H1 (cell line): ENCODE measurements at regions of chr3 and their contacts with region 1.

Region 1: GRCh38 chr3:48429317-48429959 is 448 bp downstream of the PLXNB1 start:
- DNase-seq: peak in 1 of 2 experiments; percentile 90
- H3K4me3 ChIP-seq: peak overlapping the region; percentile 66 to 85 (median 76)
- H3K27ac ChIP-seq: peak overlapping the region; percentile 94
- H3K4me1 ChIP-seq: peaks cover 7 to 37% (median 22%) of the 10 kb centered on the region in 4 experiments
- H3K27me3 ChIP-seq: no peaks in the 10 kb centered on the region
- CTCF ChIP-seq: no peak
- EP300 ChIP-seq: no peak
- POLR2A ChIP-seq: peak in 1 of 2 experiments; percentile 55; a peak in 2 of 3 replicates
- RAD21 ChIP-seq: no peak

Region 2: DNA sequence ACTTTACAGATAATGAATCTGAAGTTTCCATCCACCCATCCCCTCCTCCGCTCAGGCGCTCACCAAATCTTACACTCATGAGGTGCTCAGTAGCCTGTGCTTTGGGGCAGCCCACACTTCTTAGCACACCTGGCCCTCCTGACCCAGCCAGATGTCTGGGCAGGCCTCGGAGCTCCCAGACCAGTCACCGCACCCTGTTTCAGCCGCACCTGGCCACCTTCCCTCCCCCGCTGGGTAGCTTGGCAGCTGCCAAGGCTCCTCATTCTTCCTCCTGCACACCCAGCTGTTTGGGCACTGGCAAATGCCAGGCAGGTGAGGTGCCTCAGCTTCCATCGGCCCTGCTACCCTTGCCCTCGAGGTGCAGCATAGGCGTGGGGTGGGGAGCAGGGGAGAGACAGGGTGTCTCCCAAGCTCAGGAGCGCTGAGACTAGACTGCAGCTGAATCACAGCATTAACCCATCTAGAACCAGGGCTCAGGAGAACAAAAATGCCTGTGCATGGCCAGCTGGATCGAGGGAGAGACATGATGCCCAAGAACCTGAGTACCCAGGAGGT is 287.0 kb before region 1 on chr3:
- CTCF ChIA-PET with region 1: no interaction called
- POLR2A ChIA-PET with region 1: no interaction called
- DNase-seq: no peak
- H3K4me3 ChIP-seq: no peak overlapping the region
- H3K27ac ChIP-seq: no peak overlapping the region
- H3K4me1 ChIP-seq: peaks cover 0 to 4% (median 3%) of the 10 kb centered on the region in 4 experiments; a peak in 3 of 7 replicates
- H3K27me3 ChIP-seq: no peaks in the 10 kb centered on the region
- CTCF ChIP-seq: no peak
- EP300 ChIP-seq: no peak
- POLR2A ChIP-seq: no peak
- RAD21 ChIP-seq: no peak

Region 3: DNA sequence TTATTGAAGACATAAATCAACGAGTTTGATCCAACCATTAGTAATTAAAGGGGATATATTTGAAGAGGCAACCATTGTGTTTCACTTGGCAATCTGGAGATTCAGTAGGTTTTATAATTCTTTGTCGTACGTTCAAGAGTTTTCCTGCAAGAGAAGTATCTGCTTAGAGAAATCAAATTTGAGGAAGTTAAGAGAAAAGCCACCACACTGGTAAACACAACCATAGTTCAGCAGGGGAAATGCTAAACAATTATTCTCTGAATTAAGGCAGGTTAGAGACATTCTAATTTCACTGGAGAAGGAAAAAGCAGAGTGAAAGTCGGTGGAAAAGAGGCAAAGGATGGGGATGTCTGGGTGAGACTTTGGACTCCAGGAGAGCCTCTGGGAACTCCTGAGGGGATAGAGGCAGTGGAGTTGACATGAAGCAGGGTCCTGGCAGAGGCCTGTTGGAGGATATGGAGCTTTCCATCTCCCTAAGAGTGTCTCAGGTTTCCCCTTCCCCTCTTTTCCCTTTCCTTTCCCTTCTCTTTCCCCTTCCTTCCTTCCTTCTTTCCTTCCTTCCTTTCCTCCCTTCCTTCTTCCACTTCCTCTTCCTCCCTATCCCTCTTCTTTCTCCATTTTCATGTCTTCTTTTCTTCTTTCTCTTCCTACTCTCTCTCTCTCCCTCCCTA is 122.4 kb before region 1 on chr3:
- CTCF ChIA-PET with region 1: no interaction called
- POLR2A ChIA-PET with region 1: no interaction called
- DNase-seq: no peak
- H3K4me3 ChIP-seq: no peak overlapping the region
- H3K27ac ChIP-seq: no peak overlapping the region
- H3K4me1 ChIP-seq: no peaks in the 10 kb centered on the region; a peak in 1 of 7 replicates
- H3K27me3 ChIP-seq: peaks cover 0 to 8% (median 3%) of the 10 kb centered on the region in 4 experiments; a peak in 3 of 7 replicates
- CTCF ChIP-seq: no peak
- EP300 ChIP-seq: no peak
- POLR2A ChIP-seq: no peak
- RAD21 ChIP-seq: no peak

Region 4: DNA sequence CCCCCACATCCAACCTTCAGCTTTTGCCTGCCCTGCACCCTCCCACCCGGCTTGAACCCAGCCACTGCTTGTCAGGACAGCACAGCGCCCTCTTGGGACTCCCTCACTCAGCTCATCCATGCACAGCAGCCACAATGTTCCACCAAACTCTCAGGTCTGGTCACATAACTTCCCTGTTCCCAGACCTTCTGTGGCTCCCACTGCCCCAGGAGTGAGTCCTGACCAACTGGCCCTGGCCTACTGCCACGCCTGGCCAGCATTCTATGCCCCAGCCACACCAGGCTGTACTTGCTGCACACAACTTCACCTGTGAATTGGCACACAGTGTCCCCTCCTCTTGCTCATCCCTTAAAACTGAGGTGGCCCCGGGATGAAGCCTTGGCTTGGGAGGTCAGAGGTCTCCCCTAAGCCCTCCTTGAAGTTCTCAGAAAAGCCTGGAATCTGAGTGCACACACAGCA is 20.6 kb before region 1 on chr3:
- CTCF ChIA-PET with region 1: interaction called, 220 read pairs
- POLR2A ChIA-PET with region 1: interaction called, 650 read pairs
- DNase-seq: no peak
- H3K4me3 ChIP-seq: no peak overlapping the region
- H3K27ac ChIP-seq: no peak overlapping the region
- H3K4me1 ChIP-seq: no peaks in the 10 kb centered on the region
- H3K27me3 ChIP-seq: no peaks in the 10 kb centered on the region
- CTCF ChIP-seq: peak in 2 of 3 experiments; percentile 30 to 50; a peak in 2 of 4 replicates
- EP300 ChIP-seq: no peak
- POLR2A ChIP-seq: no peak
- RAD21 ChIP-seq: peak in 1 of 2 experiments; percentile 28; a peak in 1 of 4 replicates

Region 5: GRCh38 chr3:48415554-48415953 is 13.9 kb before region 1 on chr3:
- CTCF ChIA-PET with region 1: interaction called, 130 read pairs
- POLR2A ChIA-PET with region 1: interaction called, 650 read pairs
- DNase-seq: no peak
- H3K4me3 ChIP-seq: no peak overlapping the region
- H3K27ac ChIP-seq: no peak overlapping the region
- H3K4me1 ChIP-seq: no peaks in the 10 kb centered on the region
- H3K27me3 ChIP-seq: no peaks in the 10 kb centered on the region
- CTCF ChIP-seq: peak in 2 of 3 experiments; percentile 43 to 50; a peak in 3 of 4 replicates
- EP300 ChIP-seq: no peak
- POLR2A ChIP-seq: no peak
- RAD21 ChIP-seq: peak; percentile 17 to 49; a peak in 3 of 4 replicates

Region 6: DNA sequence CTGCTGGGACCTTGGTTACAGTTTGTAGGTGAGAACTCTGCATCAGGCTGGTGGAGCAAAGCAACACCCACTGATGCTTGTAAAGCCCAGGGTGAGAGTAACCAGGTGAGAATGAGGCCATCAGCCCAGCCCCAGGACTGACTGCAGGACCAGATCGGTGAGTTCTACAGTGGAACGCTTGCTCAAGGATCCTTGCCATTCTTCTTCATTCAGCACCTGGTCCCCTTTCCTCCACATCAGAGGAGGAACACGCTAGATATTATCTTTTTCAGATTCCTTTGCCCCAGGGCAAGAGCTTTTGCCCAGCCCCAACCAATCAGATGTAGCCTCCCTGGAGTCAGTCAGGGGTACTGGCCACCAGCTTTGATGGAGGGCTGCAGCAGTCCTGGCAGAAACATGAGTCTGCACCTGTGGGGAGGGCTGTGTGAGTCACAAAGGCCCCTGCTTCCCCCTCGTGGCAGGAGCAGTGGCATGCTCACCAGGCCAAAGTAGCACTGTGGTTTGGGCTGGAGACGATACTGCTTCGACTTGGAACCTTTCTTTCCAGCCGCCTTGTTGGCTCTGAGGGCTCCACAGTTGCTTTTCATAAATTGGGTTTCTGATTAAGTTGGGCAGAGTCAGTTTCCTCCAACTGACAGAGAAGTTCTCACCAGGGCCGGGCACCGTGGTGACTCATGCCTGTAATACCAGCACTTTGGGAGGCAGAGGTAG is 78.1 kb after region 1 on chr3:
- CTCF ChIA-PET with region 1: interaction called, 12 read pairs
- POLR2A ChIA-PET with region 1: no interaction called
- DNase-seq: peak; percentile 75 to 80
- H3K4me3 ChIP-seq: no peak overlapping the region
- H3K27ac ChIP-seq: 0 out of 2 replicates have a peak overlapping the region, but pooled peaks have one; percentile 2
- H3K4me1 ChIP-seq: peaks cover 4 to 14% (median 12%) of the 10 kb centered on the region in 4 experiments
- H3K27me3 ChIP-seq: peaks cover 0 to 3% (median 0%) of the 10 kb centered on the region in 4 experiments; a peak in 2 of 7 replicates
- CTCF ChIP-seq: peak in 2 of 3 experiments; percentile 90 to 95; a peak in 3 of 4 replicates
- EP300 ChIP-seq: no peak; a peak in 1 of 3 replicates
- POLR2A ChIP-seq: no peak
- RAD21 ChIP-seq: peak; percentile 93 to 95

Region 7: GRCh38 chr3:48575366-48575765 is 145.9 kb after region 1 on chr3:
- CTCF ChIA-PET with region 1: no interaction called
- POLR2A ChIA-PET with region 1: no interaction called
- DNase-seq: no peak
- H3K4me3 ChIP-seq: no peak overlapping the region
- H3K27ac ChIP-seq: no peak overlapping the region
- H3K4me1 ChIP-seq: no peaks in the 10 kb centered on the region
- H3K27me3 ChIP-seq: no peaks in the 10 kb centered on the region; a peak in 1 of 7 replicates
- CTCF ChIP-seq: no peak
- EP300 ChIP-seq: no peak
- POLR2A ChIP-seq: no peak
- RAD21 ChIP-seq: no peak